ENCODE measurements at regions of chr4 and their contacts with region 1.

Region 1: DNA sequence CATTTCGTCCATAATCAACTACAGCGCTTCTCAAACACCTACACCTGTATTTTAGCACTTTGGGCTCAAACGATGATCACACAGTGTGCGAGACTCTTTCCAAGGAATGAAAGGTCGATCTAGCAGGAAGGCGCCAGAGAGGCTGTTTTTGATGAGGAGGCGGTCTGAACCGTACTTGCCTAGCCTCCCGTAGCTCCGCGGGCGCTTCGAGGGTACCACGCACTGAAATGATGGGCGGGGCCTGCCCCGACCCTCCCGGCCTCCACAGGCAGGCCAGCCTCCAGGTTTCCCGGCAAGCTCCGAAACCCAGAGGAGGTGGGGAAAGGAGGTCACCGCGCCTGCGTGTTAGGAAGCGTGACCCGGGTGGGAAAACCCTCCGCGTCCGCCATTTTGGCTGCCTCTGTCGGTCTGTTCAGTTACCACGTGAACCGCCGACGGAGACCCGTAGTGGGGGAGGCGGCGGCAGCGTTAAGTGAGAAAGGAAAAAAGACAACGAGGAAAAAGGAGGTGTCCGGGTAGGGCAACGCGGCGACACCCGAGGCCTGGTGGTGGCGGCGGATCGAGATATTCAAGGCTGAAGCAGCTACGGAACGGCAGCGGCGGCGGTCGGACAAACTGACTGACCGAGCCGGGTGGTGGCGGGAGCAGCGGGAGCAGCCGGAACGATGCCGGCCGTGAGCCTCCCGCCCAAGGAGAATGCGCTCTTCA is at the start of gene NAA15:
- DNase-seq: peak; percentile 99
- H3K4me3 ChIP-seq: peak within 1 kb of the TSS; percentile 69 to 99 (median 85)
- H3K27ac ChIP-seq: peak within 1 kb of the TSS; percentile 88
- H3K4me1 ChIP-seq: peaks cover 20% of the 10 kb centered on the region
- H3K27me3 ChIP-seq: no peaks in the 10 kb centered on the region
- CTCF ChIP-seq: no peak
- POLR2A ChIP-seq: peak; percentile 28
- total RNA-seq, gene NAA15: 57.0 and 67.9 TPM in 2 replicates

Region 2: GRCh38 chr4:139083956-139084803 is 217.1 kb before region 1 on chr4:
- CTCF ChIA-PET with region 1: interaction called, 3 read pairs
- POLR2A ChIA-PET with region 1: interaction called, 11 read pairs
- dilution Hi-C with region 1: no loop called
- intact Hi-C with region 1: loop called (anchors 1 kb)
- DNase-seq: peak; percentile 91
- H3K4me3 ChIP-seq: peak overlapping the region; percentile 65 to 100 (median 92)
- H3K27ac ChIP-seq: peak overlapping the region; percentile 85
- H3K4me1 ChIP-seq: peaks cover 19% of the 10 kb centered on the region
- H3K27me3 ChIP-seq: no peaks in the 10 kb centered on the region
- CTCF ChIP-seq: peak in 1 of 2 donors; percentile 32
- POLR2A ChIP-seq: peak; percentile 36

Region 3: DNA sequence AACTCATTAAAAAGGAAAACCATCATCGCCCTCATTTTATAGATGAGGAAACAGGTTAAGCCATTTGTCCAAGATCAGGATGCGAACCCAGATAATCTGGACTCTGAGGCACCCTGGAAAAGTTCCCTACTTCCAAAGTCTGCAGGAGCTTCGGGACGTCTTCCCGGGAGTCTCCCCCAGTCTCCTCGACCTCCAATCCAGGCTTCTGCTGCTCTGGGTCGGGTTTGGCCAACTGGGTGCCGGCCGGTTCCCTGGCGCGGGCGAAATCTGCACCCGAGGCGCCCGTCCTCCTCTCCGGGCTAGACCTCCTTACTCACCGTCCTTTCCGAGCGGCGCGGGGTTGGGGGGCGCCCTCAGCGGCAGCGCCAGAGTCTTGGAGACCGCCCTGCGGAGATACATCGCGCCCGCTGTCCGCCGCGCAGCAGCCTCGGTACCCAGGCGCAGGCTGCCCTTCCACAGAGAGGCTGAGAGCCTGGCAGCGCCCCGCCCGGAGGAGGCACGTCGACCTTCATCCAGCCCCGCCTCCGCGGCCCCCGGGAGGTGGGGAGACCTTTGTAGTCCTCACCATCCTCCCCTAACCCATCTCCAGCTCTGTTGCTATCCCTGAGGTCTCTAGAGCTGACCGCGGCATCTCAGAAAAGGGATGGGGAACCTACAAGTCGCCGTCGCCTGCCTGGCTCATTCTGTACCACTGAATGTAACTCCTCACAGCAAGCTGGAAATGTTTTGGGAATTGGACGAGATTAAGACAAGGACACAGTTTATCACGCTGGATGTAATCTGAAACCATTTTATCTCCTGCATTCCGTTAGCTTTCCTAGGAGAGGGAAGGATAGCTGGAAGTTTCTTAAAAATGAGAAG is 21.3 kb before region 1 on chr4 and contains the start of gene MGARP:
- CTCF ChIA-PET with region 1: interaction called, 74 read pairs
- POLR2A ChIA-PET with region 1: interaction called, 4 read pairs
- dilution Hi-C with region 1: no loop called
- intact Hi-C with region 1: loop called (anchors 1 kb)
- DNase-seq: peak; percentile 73
- H3K4me3 ChIP-seq: peak within 1 kb of the TSS; percentile 59 to 80 (median 68)
- H3K27ac ChIP-seq: no peak within 1 kb of the TSS
- H3K4me1 ChIP-seq: peaks cover 26% of the 10 kb centered on the region
- H3K27me3 ChIP-seq: no peaks in the 10 kb centered on the region
- CTCF ChIP-seq: peak in 1 of 2 donors; percentile 2
- POLR2A ChIP-seq: peak; percentile 53
- total RNA-seq, gene MGARP: 16.2 and 25.9 TPM in 2 replicates

Region 4: DNA sequence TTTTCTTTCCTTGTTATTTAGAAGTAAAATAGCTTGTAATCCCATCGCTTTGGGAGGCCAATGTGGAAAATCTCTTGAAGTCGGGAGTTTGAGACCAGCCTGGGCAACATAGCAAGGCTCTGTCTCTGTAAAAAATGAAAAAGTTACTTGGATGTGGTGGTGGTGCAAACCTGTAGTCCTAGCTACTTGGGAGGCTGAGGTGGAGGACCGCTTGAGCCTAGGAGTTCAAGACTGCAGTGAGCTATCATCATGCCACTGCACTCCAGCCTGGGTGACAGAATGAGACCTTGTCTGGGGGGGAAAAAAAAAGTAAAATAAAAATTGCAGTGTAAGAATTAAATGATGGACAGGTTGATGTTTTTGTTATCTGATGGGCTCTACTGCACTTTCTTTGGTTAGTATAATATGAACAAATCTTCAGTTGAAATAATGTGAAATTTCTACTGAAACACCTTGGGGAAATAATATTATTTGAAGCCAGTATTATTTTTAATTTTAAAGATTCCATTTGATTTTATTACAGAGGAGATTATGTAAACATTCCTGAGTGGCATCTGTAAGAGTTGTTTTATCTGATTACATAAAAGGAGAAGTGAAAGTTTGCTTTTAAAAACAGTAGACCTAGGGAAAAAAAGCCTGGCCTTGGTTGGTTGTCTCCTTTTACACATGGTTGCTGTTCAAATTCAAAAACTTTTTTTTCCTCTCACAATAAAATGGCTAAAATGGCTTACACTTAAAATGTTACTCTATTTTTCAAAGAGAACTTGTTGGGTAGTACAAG is 11.5 kb after region 1 on chr4:
- CTCF ChIA-PET with region 1: interaction called, 11 read pairs
- POLR2A ChIA-PET with region 1: no interaction called
- dilution Hi-C with region 1: no loop called
- intact Hi-C with region 1: no loop called
- DNase-seq: no peak
- H3K4me3 ChIP-seq: no peak overlapping the region
- H3K27ac ChIP-seq: no peak overlapping the region
- H3K4me1 ChIP-seq: no peaks in the 10 kb centered on the region
- H3K27me3 ChIP-seq: no peaks in the 10 kb centered on the region
- CTCF ChIP-seq: no peak
- POLR2A ChIP-seq: no peak

Region 5: GRCh38 chr4:139319571-139319970 is 18.3 kb after region 1 on chr4:
- CTCF ChIA-PET with region 1: interaction called, 7 read pairs
- POLR2A ChIA-PET with region 1: no interaction called
- dilution Hi-C with region 1: no loop called
- intact Hi-C with region 1: loop called (anchors 2 kb)
- DNase-seq: no peak
- H3K4me3 ChIP-seq: no peak overlapping the region
- H3K27ac ChIP-seq: no peak overlapping the region
- H3K4me1 ChIP-seq: peaks cover 3% of the 10 kb centered on the region
- H3K27me3 ChIP-seq: no peaks in the 10 kb centered on the region
- CTCF ChIP-seq: no peak
- POLR2A ChIP-seq: no peak

Region 6: DNA sequence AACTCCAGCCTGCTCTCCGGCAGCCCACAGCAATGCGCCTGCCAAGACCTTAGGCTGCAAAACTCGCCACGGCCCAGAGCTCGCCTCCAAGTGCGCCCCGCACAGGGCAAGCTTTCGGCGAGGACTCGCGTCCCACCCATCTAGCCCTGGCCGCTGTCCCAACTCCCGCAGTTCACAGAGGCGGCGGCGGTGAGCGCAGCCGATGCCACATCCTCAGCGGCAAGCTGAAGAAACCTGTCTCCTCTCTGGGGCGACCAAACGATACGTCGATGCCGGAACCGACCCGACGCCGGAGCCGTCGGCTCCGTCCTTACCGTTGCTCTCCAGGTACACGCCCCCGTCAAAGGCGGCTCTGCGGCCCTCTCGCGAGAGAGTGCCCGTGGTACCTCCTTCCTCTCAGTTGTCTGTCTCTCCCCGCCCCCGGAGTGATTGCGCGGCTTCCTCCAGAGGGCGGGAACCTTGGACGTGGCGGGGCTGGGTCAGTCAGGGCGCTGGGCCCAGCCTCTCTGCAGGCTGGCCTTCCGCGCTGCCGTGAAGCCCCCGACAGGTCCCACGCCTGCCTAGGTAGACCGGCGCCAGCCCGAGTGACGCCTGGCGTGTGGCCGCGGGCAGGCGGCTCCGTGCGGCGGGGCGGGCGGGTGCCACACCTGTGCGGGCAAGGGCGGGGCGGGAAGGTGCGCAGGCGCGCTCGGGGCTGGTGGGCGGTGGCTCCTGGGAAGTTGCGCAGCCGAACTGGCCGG is 152.3 kb after region 1 on chr4:
- CTCF ChIA-PET with region 1: interaction called, 3 read pairs
- POLR2A ChIA-PET with region 1: no interaction called
- dilution Hi-C with region 1: no loop called
- intact Hi-C with region 1: loop called (anchors 1 kb)
- DNase-seq: peak; percentile 98
- H3K4me3 ChIP-seq: peak overlapping the region; percentile 91 to 99 (median 97)
- H3K27ac ChIP-seq: peak overlapping the region; percentile 89
- H3K4me1 ChIP-seq: peaks cover 45% of the 10 kb centered on the region
- H3K27me3 ChIP-seq: no peaks in the 10 kb centered on the region
- CTCF ChIP-seq: peak in 1 of 2 donors; percentile 4
- POLR2A ChIP-seq: peak; percentile 89

Region 7: GRCh38 chr4:139554893-139555704 is 253.8 kb after region 1 on chr4:
- CTCF ChIA-PET with region 1: no interaction called
- POLR2A ChIA-PET with region 1: interaction called, 3 read pairs
- dilution Hi-C with region 1: no loop called
- intact Hi-C with region 1: loop called (anchors 1 kb)
- DNase-seq: peak; percentile 96
- H3K4me3 ChIP-seq: peak overlapping the region; percentile 65 to 91 (median 89)
- H3K27ac ChIP-seq: peak overlapping the region; percentile 77
- H3K4me1 ChIP-seq: peaks cover 20% of the 10 kb centered on the region
- H3K27me3 ChIP-seq: peaks cover 15 to 23% of the 10 kb centered on the region in 2 experiments
- CTCF ChIP-seq: no peak
- POLR2A ChIP-seq: peak; percentile 78